Motor neuron (in vitro differentiated cells): ENCODE measurements at regions of chr3 and their contacts with region 1.

Region 1: DNA sequence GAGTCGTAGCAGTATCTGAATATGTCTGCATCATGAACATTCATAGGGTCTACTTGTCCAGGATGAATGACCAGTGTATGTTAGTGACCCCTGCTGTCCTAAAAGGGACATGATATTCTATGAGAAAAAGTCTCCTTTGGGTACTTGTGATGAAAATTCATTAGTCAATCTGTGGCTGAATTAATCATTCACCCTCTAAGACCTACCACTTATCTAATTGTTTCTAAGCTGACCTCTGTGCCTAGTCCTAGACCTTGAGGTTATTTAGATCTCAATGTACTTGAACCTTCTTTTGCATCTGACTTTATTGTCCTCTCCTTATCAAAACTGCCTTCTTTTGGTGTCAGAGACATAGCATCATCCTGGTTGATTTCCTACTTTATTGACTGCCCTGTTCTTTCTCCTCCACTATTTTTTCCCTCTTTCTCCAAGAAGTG is 799.3 kb downstream of the DIPK2A start:
- ATAC-seq: peak in 4 of 8 experiments; percentile 55 to 77 (median 62)
- H3K4me3 ChIP-seq: no peak overlapping the region
- H3K27ac ChIP-seq: no peak overlapping the region
- H3K4me1 ChIP-seq: peaks cover 5 to 8% of the 10 kb centered on the region in 2 donors

Region 2: GRCh38 chr3:143972505-143973255 is 798.3 kb before region 1 on chr3:
- in situ Hi-C with region 1: loop called in 1 of 9 experiments (anchors 25 kb)
- ATAC-seq: peak; percentile 17 to 45 (median 38)
- H3K4me3 ChIP-seq: peak overlapping the region; percentile 57 to 82 (median 63)
- H3K27ac ChIP-seq: peak overlapping the region; percentile 91 to 93
- H3K4me1 ChIP-seq: peaks cover 0 to 3% of the 10 kb centered on the region in 2 donors